HEK293 (cell line): ENCODE measurements at regions of chr14 and their contacts with region 1.

Region 1: DNA sequence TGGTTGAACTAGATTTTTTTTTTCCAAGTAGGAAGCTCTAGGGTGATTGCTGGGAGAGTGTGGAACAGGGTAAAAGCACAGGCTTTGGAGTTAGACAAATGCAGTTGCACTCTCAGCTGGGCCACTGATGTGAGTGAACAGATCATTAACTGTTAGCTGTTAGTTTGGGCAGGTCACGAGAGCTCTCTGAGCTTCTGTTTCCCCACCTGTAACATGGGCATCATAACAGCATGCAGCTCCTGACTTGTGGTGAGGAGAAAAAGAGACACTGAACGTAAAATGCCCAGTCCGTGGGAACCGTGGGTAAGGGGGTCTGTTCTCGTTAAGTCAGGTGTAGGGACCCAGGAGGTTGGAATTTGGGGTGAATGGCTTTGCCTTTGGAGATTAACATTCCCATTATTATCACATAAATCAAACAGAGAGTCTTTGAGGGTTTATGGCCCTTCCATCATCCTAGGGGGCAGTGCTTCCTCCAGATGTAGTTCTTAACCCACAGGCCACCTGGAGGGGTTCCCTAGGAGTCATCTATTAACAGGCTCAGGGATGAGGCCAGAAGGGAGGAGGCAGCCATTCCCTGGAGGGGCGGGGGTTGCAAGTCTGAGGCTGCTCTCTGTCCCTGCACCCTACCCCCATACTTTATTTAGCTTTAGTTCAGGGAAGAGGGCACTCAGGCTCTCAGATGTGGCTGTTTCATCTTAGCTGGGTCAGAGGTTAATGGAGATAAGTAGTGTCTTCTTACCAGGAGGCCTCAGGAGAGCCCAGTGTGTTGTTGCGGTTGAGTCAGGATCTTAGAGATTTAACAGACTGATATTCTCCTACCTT is 135.2 kb downstream of the DACT1 start:
- H3K4me3 ChIP-seq: no peak overlapping the region
- H3K27ac ChIP-seq: peak overlapping the region; percentile 65
- H3K4me1 ChIP-seq: peaks cover 38% of the 10 kb centered on the region
- CTCF ChIP-seq: 0 out of 2 replicates have a peak, but pooled peaks have one; percentile 20

Region 2: DNA sequence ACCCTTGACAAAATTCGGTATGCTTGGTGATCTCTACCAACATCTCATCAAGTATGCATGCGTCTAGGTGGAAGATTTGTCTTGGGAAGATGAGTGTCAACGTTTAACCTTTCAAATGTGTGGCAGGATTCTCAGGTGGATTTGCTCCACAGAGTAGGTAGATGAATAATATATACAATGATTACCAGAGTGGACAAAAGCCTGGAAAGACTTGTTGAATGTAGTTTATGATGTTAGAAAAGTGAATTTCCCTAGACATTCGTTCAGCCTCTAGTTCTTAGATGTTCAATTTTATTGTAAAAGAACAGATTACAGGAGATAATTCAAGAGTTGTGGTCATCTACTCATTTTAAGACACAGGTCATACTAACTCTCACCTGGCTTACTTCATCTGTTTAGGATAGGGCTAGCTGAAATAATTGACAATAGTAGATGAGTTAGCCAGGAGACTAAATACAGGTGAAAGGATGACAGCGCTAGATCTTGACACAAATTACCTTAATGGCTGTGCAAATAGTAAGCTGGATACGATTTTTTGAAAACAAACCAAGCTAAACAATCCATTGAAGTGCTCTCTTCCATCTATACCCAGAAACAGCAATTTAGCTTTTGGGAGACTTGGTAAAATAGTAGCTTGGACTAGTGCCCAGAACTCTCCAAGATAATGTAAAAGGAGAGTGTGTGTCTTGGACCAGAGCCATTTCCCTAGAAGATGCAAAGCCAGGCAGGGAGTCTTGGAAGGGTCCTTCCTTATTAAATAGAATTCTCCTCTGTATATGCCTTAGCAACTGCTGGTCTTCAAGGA is 32.8 kb after region 1 on chr14:
- CTCF ChIA-PET with region 1: interaction called, 4 read pairs
- POLR2A ChIA-PET with region 1: interaction called, 11 read pairs
- H3K4me3 ChIP-seq: no peak overlapping the region
- H3K27ac ChIP-seq: peak overlapping the region; percentile 78
- H3K4me1 ChIP-seq: peaks cover 37% of the 10 kb centered on the region
- CTCF ChIP-seq: no peak